ENCODE measurements at regions of chr9 and their contacts with region 1.

Region 1: DNA sequence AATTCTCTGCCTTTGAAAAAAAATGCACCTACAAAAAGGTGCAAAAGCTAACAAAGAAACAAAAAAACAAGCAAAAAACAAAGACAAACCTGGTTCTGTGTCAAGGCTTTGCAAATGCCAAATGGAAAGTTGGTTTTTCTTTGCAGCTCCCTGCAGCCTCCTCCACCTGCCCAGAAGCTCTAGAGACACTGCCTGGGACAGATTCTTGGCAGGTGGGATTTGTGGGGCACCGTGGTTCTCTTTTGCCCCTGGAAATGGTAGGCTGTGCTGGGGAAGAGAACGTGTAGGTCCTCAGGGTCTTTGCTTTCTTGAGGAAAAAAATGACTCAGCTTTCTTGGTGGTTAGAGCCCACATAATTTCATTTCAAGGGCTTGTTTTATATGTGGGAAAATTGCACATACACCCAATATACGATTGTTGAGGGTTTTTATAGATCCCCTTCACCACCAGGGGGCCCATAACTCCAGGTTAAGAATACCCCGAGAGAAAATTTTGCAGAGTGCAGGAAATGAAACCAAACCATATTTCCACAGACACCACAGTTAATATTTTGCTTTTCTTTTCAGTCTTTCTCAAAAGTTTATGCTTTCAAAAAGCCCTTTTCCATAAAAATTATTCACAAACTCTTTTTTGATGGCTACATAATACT is 58.7 kb downstream of the NXNL2 start:
- DNase-seq: peak in 3 of 10 donors; percentile 29 to 44 (median 36)

Region 2: GRCh38 chr9:88645172-88645878 is 51.7 kb after region 1 on chr9:
- intact Hi-C with region 1: loop called (anchors 10 kb)
- DNase-seq: no peak

Region 3: GRCh38 chr9:88733651-88734421 is 140.2 kb after region 1 on chr9:
- intact Hi-C with region 1: loop called (anchors 10 kb)
- DNase-seq: no peak

Region 4: GRCh38 chr9:89000973-89001916 is 407.6 kb after region 1 on chr9:
- intact Hi-C with region 1: loop called (anchors 2 kb)
- DNase-seq: peak; percentile 79 to 98 (median 90)

Measured in posterior cingulate gyrus (tissue), 11 donors.